ENCODE measurements at regions of chr17 and their contacts with region 1.

Region 1: GRCh38 chr17:28018439-28019070 is 23.9 kb upstream of the NLK start:
- DNase-seq: no peak
- ATAC-seq: no peak
- H3K4me3 ChIP-seq: no peak overlapping the region
- H3K27ac ChIP-seq: no peak overlapping the region
- H3K4me1 ChIP-seq: 0 out of 5 replicates have a peak, but pooled peaks cover 0 to 2% of the 10 kb centered on the region in 2 experiments
- H3K27me3 ChIP-seq: no peaks in the 10 kb centered on the region
- CTCF ChIP-seq: no peak
- EP300 ChIP-seq: no peak
- POLR2A ChIP-seq: no peak
- RAD21 ChIP-seq: no peak

Region 2: GRCh38 chr17:28030386-28030785 is 11.8 kb after region 1 on chr17:
- CTCF ChIA-PET with region 1: no interaction called
- POLR2A ChIA-PET with region 1: interaction called, 15 read pairs
- in situ Hi-C with region 1: no loop called
- intact Hi-C with region 1: no loop called
- DNase-seq: no peak
- ATAC-seq: no peak
- H3K4me3 ChIP-seq: no peak overlapping the region
- H3K27ac ChIP-seq: no peak overlapping the region
- H3K4me1 ChIP-seq: peaks cover 7 to 41% of the 10 kb centered on the region in 2 experiments
- H3K27me3 ChIP-seq: no peaks in the 10 kb centered on the region
- CTCF ChIP-seq: no peak
- EP300 ChIP-seq: no peak
- POLR2A ChIP-seq: no peak
- RAD21 ChIP-seq: no peak

Region 3: DNA sequence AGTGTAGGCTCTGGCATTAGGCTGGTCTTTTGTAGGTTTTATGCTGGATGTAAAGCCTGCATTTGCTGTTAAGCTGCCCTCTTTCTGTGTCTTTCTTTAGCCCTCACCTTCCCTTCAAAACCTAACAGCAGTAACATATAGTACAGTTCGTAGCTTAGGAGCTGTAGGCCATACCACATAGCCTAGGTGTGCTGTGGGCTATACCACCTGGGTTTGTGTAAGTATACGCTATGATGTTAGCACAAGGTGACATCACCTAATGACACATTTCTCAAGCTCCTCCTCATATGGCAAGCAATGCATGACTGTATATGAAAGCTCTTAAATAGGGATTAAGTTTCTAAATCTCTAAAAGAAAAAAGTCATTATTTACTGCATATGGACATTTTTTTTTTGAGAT is 242.6 kb after region 1 on chr17:
- CTCF ChIA-PET with region 1: no interaction called
- POLR2A ChIA-PET with region 1: no interaction called
- in situ Hi-C with region 1: no loop called
- intact Hi-C with region 1: no loop called
- DNase-seq: no peak
- ATAC-seq: no peak
- H3K4me3 ChIP-seq: no peak overlapping the region
- H3K27ac ChIP-seq: no peak overlapping the region
- H3K4me1 ChIP-seq: peaks cover 0 to 5% of the 10 kb centered on the region in 2 experiments; a peak in 1 of 5 replicates
- H3K27me3 ChIP-seq: peaks cover 8 to 17% of the 10 kb centered on the region in 2 experiments; a peak in 3 of 5 replicates
- CTCF ChIP-seq: no peak
- EP300 ChIP-seq: no peak
- POLR2A ChIP-seq: no peak
- RAD21 ChIP-seq: no peak

Measured in K562 (cell line).